Activated naive CD4-positive, alpha-beta T cell treated with anti-CD3 and anti-CD28 coated beads for 36 hours (primary cell): ENCODE measurements at regions of chr11 and their contacts with region 1.

Region 1: DNA sequence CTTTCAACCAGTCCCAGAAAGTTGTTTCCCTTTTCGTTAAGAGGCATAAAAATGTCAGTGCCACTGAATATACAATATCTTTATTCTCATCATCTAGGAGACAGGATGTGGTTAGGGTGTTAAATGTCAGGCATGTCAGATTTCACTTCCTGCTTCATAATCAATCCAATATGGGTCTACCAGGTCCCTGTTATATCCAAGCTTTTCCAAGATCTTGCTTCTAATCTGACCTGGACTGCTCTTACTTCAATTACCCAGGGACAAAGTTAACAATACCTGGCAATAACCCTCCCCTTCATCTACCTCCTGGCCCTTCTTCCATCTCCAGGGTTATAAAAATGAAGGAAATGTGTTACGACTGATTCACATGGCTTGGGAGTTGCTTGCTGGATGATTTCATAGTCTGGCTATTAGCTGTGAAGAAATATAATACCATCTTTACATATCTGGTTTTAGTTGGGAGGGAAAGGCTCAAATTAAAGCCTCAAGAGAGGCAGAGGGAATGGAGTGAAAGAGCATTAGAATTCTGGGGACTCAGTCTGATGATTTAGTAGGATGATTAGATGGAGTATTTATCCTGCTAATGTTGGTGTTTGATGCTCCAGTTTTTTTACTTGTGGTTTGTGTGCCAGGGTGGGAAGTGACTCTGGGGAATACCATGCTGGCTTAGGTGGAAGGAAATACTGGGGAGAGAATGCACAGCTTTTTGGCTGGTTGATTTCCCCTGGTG is 534.3 kb downstream of the ETS1 start:
- DNase-seq: no peak
- H3K4me3 Mint-ChIP-seq: peak overlapping the region; percentile 49
- H3K27ac Mint-ChIP-seq: peak overlapping the region; percentile 86
- H3K4me1 Mint-ChIP-seq: peaks cover 67% of the 10 kb centered on the region
- H3K27me3 Mint-ChIP-seq: no peaks in the 10 kb centered on the region

Region 2: DNA sequence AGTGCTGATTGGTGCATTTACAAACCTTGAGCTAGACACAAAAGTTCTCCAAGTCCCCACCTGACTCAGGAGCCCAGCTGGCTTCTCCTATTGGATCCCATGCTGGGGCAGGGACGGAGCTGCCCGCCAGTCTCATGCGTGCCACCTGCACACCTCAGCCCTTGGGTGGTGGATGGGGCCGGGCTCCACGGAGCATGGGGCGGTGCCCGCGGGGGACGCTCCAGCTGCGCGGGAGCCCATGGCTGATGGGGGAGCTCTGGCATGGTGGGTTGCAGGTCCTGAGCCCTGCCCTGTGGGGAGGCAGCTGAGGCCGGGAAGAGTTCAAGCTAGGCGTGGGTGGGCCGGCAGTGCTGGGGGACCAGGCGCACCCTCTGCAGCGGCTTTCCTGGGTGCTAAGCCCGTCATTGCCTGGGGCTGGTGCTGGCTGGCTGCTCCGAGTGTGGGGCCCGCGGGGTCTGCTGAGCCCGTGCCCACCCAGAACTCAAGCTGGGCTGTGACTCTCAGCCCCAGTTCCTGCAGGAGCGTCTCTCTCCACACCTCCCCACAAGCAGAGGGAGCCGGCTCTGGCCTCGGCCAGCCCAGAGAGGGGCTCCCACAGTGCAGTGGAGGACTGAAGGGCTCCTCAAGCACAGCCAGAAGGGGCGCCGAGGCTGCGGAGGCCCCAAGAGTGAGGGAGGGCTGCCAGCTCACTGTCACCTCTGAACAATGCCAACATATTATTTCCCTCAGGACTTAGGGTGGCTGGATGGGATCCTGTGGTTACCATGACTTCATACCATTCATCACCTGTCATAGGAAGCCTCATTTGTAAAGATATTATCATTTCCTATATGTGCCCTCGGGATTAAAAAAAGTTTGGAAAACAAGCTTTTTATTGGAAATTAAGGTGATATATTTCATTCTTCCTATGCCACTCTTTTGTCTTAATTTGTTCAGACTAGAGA is 154.4 kb before region 1 on chr11:
- CTCF ChIA-PET with region 1: no interaction called
- intact Hi-C with region 1: no loop called
- DNase-seq: no peak
- H3K4me3 Mint-ChIP-seq: no peak overlapping the region
- H3K27ac Mint-ChIP-seq: no peak overlapping the region
- H3K4me1 Mint-ChIP-seq: no peaks in the 10 kb centered on the region
- H3K27me3 Mint-ChIP-seq: peaks cover 4% of the 10 kb centered on the region

Region 3: GRCh38 chr11:128098781-128099180 is 45.7 kb after region 1 on chr11:
- CTCF ChIA-PET with region 1: interaction called, 4 read pairs
- intact Hi-C with region 1: loop called (anchors 1 kb)
- DNase-seq: peak; percentile 9
- H3K4me3 Mint-ChIP-seq: no peak overlapping the region
- H3K27ac Mint-ChIP-seq: peak overlapping the region; percentile 76
- H3K4me1 Mint-ChIP-seq: peaks cover 39% of the 10 kb centered on the region
- H3K27me3 Mint-ChIP-seq: no peaks in the 10 kb centered on the region

Region 4: GRCh38 chr11:128624269-128625175 is 571.4 kb after region 1 on chr11:
- CTCF ChIA-PET with region 1: no interaction called
- intact Hi-C with region 1: loop called (anchors 5 kb)
- DNase-seq: peak; percentile 79
- H3K4me3 Mint-ChIP-seq: peak overlapping the region; percentile 59
- H3K27ac Mint-ChIP-seq: peak overlapping the region; percentile 89
- H3K4me1 Mint-ChIP-seq: peaks cover 92% of the 10 kb centered on the region
- H3K27me3 Mint-ChIP-seq: no peaks in the 10 kb centered on the region

Region 5: GRCh38 chr11:128720522-128720985 is 667.5 kb after region 1 on chr11:
- CTCF ChIA-PET with region 1: no interaction called
- intact Hi-C with region 1: loop called (anchors 5 kb)
- DNase-seq: peak; percentile 72
- H3K4me3 Mint-ChIP-seq: peak overlapping the region; percentile 73
- H3K27ac Mint-ChIP-seq: peak overlapping the region; percentile 87
- H3K4me1 Mint-ChIP-seq: peaks cover 97% of the 10 kb centered on the region
- H3K27me3 Mint-ChIP-seq: no peaks in the 10 kb centered on the region